ENCODE measurements at regions of chr6 and their contacts with region 1.

Region 1: DNA sequence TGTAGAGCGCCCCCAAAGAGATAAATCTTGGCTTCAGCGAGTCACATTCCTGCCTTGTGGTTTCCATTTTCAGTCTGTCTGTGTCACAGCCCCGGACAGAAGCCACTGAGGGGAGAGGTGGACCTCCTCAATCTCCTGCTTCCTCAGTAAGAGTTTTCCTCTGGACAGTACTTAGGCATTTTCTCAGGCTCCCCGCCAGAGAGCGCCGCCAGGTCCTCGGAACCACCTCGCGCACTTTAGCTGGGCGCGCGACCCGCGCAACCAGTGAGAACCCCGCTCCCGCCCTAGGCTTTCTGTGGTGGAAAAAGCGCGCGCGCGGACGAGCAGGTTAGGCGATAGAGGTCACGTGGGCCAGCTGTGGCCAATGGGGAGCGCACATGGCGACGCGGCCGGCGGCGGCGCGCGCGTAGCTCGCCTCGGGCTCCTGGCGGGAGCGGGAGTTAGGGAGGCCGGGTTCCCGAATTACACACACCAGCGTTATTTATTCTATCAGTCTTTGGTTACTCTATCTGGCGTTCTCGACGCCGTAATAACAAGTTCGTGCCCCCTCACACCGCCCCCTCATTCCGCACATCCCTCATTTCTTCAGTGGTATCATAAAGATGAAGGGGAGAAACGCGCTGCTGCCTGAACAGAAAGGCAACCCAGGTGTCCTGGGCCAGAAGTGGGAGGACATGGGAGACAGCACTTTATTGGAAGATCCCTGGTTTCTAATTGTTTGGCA is 19.4 kb downstream of the PXT1 start:
- DNase-seq: peak; percentile 99
- H3K4me3 ChIP-seq: peak overlapping the region; percentile 36 to 61 (median 50)
- H3K27ac ChIP-seq: peak overlapping the region; percentile 86 to 90 (median 89)
- H3K4me1 ChIP-seq: peaks cover 0 to 8% (median 7%) of the 10 kb centered on the region in 4 donors
- H3K27me3 ChIP-seq: no peaks in the 10 kb centered on the region
- CTCF ChIP-seq: peak; percentile 29 to 57 (median 51)
- EP300 ChIP-seq: no peak
- POLR2A ChIP-seq: peak; percentile 70 to 80

Region 2: GRCh38 chr6:36442671-36443470 is 19.6 kb after region 1 on chr6 and contains the starts of genes KCTD20 and PXT1:
- intact Hi-C with region 1: loop called (anchors 1 kb)
- DNase-seq: peak; percentile 95
- H3K4me3 ChIP-seq: peak within 1 kb of the TSS; percentile 87 to 99 (median 94)
- H3K27ac ChIP-seq: peak within 1 kb of the TSS; percentile 97 to 99 (median 98)
- H3K4me1 ChIP-seq: peaks cover 2 to 41% (median 37%) of the 10 kb centered on the region in 4 donors
- H3K27me3 ChIP-seq: no peaks in the 10 kb centered on the region
- CTCF ChIP-seq: no peak
- EP300 ChIP-seq: peak in 2 of 4 donors; percentile 19 to 69
- POLR2A ChIP-seq: peak; percentile 32 to 69
- total RNA-seq, gene KCTD20: 48.5 to 71.3 (median 50.8) TPM
- total RNA-seq, gene PXT1: not detected

Region 3: DNA sequence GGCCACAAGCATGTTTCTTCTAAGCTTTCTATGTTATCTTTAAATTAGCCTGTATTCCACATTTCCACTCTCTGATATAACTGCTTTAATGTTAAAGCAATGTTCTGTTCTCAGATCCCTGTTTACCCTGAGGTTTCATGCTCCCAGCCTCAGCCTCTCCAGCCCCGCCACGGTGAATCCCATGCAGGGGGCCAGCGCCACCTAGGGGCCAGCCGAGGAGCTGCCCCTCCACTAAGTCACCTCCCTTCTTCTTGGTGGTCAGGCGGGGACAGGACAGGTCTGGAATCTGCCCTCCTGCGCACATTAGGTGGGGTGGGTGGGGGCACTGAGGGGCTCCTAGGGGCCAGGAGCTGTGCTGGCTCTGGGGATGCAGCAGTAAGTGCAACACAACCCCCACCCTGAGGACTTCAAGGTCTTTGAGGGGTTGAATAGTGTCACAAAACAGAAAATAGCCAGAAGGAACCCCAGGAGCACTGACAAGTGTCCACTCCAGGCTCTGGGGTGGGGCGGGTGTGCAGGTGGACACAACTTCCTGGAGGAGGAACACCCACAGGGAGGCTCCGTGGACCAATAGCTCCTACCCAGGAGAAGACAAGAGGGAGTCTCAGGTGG is 336.0 kb after region 1 on chr6:
- intact Hi-C with region 1: loop called (anchors 5 kb)
- DNase-seq: peak; percentile 92
- H3K4me3 ChIP-seq: no peak overlapping the region
- H3K27ac ChIP-seq: no peak overlapping the region
- H3K4me1 ChIP-seq: peaks cover 0 to 8% (median 6%) of the 10 kb centered on the region in 4 donors
- H3K27me3 ChIP-seq: no peaks in the 10 kb centered on the region
- CTCF ChIP-seq: peak; percentile 88 to 98 (median 94)
- EP300 ChIP-seq: no peak
- POLR2A ChIP-seq: no peak

Region 4: DNA sequence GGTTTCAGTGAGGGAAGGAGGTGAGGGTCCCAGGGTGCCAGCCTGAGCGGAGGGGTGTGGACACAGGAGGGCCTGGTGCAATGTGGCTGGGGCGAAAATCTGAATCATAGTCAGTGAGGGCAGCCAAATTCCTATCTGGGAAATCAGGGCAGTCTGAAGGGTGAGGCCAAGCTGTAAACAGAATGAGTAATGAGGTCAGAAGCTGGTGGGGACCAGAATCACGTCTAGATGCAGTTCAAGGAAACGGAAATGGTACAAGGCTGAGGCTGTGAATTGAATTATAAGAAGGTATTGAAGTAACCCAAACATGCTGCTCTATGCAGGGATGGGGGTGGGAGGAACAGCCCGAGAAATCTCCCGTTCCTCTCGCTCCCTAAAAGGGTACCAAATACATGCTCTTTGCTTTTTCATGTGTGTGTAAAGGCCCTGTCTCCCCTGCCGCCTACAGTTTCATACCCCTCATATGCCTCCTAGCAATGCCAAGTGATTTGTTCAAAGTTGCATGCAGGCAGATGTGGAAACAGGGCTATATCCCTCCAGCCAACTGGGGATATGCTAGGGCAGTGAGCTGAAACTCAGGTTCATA is 711.4 kb after region 1 on chr6:
- intact Hi-C with region 1: no loop called
- DNase-seq: peak; percentile 81
- H3K4me3 ChIP-seq: no peak overlapping the region
- H3K27ac ChIP-seq: peak overlapping the region; percentile 86 to 97 (median 93)
- H3K4me1 ChIP-seq: peaks cover 0 to 93% (median 60%) of the 10 kb centered on the region in 4 donors
- H3K27me3 ChIP-seq: no peaks in the 10 kb centered on the region
- CTCF ChIP-seq: no peak
- EP300 ChIP-seq: no peak
- POLR2A ChIP-seq: no peak